ENCODE measurements at regions of chr9 and their contacts with region 1.

Region 1: GRCh38 chr9:123225374-123225813 is 43.0 kb downstream of the STRBP start:
- DNase-seq: no peak
- ATAC-seq: no peak

Region 2: GRCh38 chr9:122904823-122905710 is 320.3 kb before region 1 on chr9 and contains the start of gene RC3H2:
- intact Hi-C with region 1: loop called (anchors 10 kb)
- DNase-seq: peak; percentile 99
- ATAC-seq: peak; percentile 99
- total RNA-seq, gene RC3H2: 35.1 TPM

Region 3: GRCh38 chr9:123081824-123082223 is 143.6 kb before region 1 on chr9:
- intact Hi-C with region 1: loop called (anchors 10 kb)
- DNase-seq: no peak
- ATAC-seq: no peak

Region 4: DNA sequence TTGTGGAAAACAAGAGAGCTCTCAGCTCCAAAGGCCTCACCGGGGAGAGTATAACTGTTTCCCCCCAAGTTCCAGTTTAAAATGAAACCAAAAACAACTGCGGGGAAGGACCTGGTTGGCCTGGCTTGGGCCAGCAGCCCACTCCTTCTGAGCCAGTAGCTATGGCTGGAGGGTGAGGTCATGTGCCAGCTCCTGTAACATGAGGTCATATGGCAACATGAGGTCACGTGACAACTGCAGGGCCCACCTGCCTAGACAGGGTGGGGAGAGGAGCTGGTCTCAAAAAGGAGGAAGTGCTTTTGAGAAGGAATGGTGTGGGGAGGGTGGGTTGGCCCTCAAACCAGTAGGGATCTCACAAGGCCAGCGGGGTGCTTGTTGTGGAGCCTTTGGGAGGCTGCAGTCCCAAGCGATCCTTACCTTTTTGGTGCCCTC is 101.3 kb after region 1 on chr9:
- intact Hi-C with region 1: no loop called
- DNase-seq: peak; percentile 57
- ATAC-seq: no peak